ENCODE measurements at regions of chr7 and their contacts with region 1.

Region 1: DNA sequence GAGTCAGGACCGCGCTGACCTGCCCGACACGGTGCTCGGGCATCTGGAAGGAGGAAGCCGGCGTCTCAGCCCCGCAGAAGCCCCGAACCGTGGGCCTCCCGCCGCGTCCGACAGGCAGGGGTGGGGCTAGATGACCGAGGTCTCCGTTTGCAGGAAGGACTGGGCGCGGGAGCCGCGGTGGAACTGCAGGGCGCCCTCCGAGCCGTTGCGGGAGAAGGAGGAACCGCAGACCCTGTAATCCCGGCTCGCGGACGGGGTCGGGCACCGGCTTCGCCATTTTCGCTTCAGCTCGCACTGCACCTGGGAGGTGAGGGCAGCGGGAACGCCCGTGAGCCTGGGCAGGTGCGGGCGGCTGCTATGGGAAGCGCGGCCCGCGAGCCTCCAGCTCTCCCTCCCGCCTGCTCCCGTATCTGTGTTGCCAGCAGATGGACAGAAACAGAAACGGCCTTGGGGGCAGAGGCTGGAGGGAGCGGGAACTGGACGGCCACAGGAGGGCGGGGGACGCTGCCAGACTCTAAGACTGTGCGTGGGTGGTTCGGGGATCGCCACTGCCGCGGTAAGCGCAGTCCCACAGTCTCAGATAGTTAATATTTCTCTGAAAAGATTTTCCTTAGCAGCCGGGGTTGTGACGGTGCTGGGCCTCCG is 114.1 kb downstream of the VIPR2 start:
- DNase-seq: peak; percentile 49 to 84
- H3K4me3 ChIP-seq: peak overlapping the region; percentile 56 to 57
- H3K27ac ChIP-seq: peak overlapping the region; percentile 87 to 95
- H3K4me1 ChIP-seq: peaks cover 0 to 56% (median 28%) of the 10 kb centered on the region in 4 donors
- H3K27me3 ChIP-seq: no peaks in the 10 kb centered on the region
- CTCF ChIP-seq: peak; percentile 57 to 58

Region 2: GRCh38 chr7:158891922-158892321 is 138.7 kb before region 1 on chr7:
- intact Hi-C with region 1: no loop called
- DNase-seq: no peak
- H3K4me3 ChIP-seq: no peak overlapping the region
- H3K27ac ChIP-seq: no peak overlapping the region
- H3K4me1 ChIP-seq: no peaks in the 10 kb centered on the region
- H3K27me3 ChIP-seq: no peaks in the 10 kb centered on the region
- CTCF ChIP-seq: no peak

Region 3: GRCh38 chr7:159004411-159004810 is 26.2 kb before region 1 on chr7:
- intact Hi-C with region 1: loop called (anchors 1 kb)
- DNase-seq: no peak
- H3K4me3 ChIP-seq: no peak overlapping the region
- H3K27ac ChIP-seq: no peak overlapping the region
- H3K4me1 ChIP-seq: no peaks in the 10 kb centered on the region
- H3K27me3 ChIP-seq: no peaks in the 10 kb centered on the region
- CTCF ChIP-seq: no peak

Region 4: GRCh38 chr7:159098811-159099655 is 68.4 kb after region 1 on chr7:
- intact Hi-C with region 1: loop called (anchors 5 kb)
- DNase-seq: peak in 1 of 2 donors; percentile 84
- H3K4me3 ChIP-seq: no peak overlapping the region
- H3K27ac ChIP-seq: peak overlapping the region; percentile 93 to 94
- H3K4me1 ChIP-seq: peaks cover 0 to 85% (median 70%) of the 10 kb centered on the region in 4 donors
- H3K27me3 ChIP-seq: no peaks in the 10 kb centered on the region
- CTCF ChIP-seq: peak; percentile 11 to 30

Region 5: DNA sequence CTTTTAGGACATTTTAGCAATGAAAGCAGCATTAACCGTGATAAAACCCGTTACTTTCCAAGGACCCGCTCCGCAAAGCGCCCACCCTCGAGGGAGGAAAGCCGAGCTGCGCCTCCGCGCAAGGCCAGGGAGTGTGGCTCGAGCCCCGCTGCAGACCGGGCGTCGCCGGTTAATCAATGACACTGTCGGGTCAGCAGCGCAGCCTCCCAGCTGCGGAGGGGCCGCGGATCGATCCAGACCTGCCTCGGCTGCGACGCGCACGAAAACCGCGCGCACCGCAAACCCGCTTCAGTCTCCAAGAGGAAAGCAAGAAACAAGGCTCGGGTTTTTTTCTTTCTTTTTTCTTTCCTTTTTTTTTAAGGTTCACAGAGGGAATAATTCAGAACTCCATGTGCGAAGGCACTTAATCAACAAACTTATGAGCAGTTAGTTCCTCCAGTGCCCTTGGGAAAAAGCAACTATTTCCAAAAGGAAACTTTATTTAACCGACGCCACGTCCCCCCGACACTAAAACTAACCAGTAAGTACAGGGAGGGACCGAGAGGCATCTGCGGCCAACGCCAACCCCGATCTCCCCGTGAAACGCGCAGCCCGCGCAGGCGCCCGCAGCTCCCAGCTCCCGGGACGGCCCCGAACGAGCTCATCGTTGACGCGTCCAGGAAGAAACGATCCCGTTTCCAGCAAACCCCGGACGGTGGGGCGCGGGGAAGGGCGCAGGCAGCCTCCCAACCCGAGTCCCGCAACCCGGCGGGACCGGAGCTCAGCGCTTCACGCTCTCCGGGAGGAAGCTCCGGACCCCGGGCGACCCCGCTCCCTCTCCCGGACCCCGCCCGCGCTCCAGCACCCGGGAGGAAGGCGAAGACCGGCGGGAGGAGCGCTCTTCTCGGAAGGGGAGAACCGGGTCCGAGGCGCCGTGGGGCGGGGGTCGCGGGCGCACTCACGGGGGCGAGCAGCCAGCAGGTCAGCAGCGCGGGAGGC is 113.5 kb after region 1 on chr7:
- intact Hi-C with region 1: loop called (anchors 10 kb)
- DNase-seq: peak in 1 of 2 donors; percentile 77
- H3K4me3 ChIP-seq: peak overlapping the region; percentile 71 to 78
- H3K27ac ChIP-seq: peak overlapping the region; percentile 63 to 74
- H3K4me1 ChIP-seq: peaks cover 0 to 24% (median 15%) of the 10 kb centered on the region in 4 donors
- H3K27me3 ChIP-seq: no peaks in the 10 kb centered on the region
- CTCF ChIP-seq: no peak